ENCODE measurements at regions of chr12 and their contacts with region 1.

Region 1: DNA sequence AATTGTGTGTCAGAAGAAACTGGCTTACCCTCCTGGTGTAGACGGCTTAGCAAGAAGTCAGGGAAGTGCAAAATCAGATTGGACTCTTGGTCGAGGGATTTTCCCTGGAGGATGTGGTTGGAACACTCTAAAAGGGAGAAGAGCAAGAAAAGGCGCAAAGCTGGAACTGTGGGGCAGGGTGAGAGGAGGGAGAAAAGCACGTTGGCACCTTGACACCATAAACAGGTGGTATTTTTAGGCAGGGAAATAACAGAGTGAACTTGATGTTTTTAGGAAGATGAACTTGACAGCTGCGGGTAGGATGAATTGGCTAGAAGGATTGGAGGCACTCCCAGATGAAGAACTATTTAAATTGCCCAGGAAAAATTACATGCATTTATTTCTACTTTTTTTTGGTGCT is 67.7 kb downstream of the HCAR2 start:
- DNase-seq: no peak
- ATAC-seq: no peak

Region 2: DNA sequence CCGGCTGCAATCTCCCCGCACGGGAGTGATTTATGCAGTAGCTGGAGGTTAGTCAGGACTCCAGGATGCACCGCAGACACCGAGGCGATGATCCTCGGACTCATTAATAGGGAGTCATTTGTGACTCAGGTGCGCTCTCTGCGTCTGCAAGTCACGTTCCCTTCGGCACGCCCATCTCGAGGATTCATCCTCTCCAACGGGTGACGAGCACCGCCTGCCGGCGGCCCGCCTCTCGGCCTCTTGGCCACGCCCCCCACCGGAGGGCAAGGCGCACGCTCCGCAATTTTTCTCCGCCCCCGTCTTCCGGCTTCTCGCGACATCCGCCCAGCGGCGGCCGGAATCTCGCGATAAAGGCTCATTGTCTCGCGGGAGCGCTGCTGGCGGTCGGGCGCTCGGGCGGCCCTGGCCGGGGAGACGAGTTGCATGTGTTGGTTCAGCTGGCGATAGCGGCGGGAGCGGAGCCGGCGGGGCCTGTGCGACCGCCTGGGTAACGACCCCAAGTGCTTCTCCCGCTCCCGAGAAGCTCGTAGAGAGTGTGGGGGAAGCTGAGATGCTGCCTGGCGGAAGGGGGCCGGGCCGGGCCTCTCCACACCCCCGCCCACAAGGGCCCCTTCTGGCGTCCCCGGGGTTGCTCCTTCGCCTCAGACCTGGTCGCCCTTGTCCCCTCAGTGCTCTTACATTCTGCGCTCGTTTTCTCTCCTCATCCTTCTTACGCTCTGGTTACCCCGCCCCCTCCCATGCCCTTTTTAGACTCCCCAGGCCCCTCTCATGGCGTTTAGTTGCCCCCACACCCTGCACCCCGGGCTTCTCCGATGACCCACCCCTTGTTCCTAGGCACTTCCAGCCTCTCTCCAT is 117.2 kb after region 1 on chr12 and contains the start of gene DENR:
- intact Hi-C with region 1: loop called (anchors 5 kb)
- DNase-seq: peak; percentile 98
- ATAC-seq: peak; percentile 99
- total RNA-seq, gene DENR: 24.3 TPM

Region 3: GRCh38 chr12:123972457-123973401 is 1337.3 kb after region 1 on chr12 and contains the starts of genes CCDC92 and ZNF664:
- intact Hi-C with region 1: no loop called
- DNase-seq: peak; percentile 94
- ATAC-seq: peak; percentile 91
- total RNA-seq, gene CCDC92: 54.0 TPM
- total RNA-seq, gene ZNF664: 71.3 TPM